Activated CD8-positive, alpha-beta T cell treated with anti-CD3 and anti-CD28 coated beads for 36 hours (primary cell): ENCODE measurements at regions of chr20 and their contacts with region 1.

Region 1: DNA sequence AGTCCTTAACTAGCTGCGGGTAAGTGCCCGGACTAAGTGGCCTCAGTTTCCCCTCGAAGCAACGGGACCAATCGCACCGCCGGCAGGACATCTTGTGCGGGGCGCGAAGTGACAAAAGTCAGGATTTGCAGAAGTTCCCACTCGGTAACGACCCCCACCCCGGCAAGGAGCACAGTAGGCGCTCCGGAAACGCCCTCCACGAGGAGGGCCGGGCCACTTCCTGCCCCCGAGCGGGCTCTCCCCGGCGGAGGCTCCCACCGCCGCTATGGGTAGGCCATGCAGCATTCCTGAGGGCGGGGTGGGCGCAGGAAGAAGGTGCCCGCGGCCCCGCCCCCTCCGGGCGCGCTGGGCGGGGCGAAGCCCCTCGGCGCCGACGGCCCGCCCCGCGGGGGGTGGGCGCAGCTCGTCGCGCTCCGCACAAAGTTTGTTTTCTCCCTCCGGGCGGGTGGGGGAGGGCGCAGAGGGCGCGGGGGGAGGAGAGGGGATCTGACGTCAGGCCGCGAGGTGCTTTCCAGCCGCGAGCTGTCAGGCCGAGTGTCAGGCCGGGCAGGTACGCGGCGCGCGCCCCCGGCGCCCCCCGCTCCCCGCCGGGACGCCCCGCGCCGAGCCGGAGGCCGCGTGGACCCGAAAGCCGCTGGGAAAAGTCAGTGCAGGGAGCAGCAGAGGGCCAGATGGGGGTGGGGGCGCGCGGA is at the start of gene TGIF2:
- DNase-seq: peak; percentile 91
- ATAC-seq: peak; percentile 81
- H3K4me3 Mint-ChIP-seq: peak within 1 kb of the TSS; percentile 91
- H3K27ac Mint-ChIP-seq: peak within 1 kb of the TSS; percentile 96
- H3K4me1 Mint-ChIP-seq: peaks cover 30% of the 10 kb centered on the region
- H3K27me3 Mint-ChIP-seq: no peaks in the 10 kb centered on the region
- CTCF ChIP-seq: no peak
- total RNA-seq, gene TGIF2: 55.3 to 56.8 TPM

Region 2: DNA sequence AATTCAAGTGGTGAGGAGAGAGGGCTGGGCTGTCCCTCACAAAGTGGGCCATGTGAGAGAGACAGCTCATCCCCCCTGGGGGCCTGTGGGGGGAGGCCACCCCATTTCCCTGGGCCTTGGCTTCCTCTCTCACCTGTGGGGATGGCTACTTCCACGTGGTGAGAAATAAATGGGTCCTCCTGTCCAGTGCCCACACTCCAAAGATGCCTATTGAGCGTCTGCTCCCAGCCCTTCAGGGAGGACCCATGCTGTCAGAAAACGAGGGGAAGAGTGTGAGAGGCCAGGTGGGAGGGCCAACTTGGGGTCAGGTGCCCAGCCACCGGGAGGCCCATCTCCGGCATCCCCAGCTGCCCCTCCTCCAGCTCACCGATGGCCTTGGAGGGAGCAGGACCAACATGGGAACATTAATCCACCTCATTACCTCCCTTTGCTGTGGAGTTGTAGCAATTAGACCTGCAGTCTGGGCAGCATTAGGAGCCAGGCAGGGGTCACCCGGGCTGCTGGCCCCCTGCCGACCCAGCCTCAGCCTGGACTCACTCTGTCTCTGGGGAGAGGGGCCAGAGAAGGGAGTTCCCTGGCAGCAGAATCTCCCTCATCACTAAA is 242.1 kb before region 1 on chr20:
- CTCF ChIA-PET with region 1: no interaction called
- POLR2A ChIA-PET with region 1: no interaction called
- intact Hi-C with region 1: no loop called
- DNase-seq: no peak
- ATAC-seq: no peak
- H3K4me3 Mint-ChIP-seq: no peak overlapping the region
- H3K27ac Mint-ChIP-seq: no peak overlapping the region
- H3K4me1 Mint-ChIP-seq: no peaks in the 10 kb centered on the region
- H3K27me3 Mint-ChIP-seq: peaks cover 23% of the 10 kb centered on the region
- CTCF ChIP-seq: no peak

Region 3: DNA sequence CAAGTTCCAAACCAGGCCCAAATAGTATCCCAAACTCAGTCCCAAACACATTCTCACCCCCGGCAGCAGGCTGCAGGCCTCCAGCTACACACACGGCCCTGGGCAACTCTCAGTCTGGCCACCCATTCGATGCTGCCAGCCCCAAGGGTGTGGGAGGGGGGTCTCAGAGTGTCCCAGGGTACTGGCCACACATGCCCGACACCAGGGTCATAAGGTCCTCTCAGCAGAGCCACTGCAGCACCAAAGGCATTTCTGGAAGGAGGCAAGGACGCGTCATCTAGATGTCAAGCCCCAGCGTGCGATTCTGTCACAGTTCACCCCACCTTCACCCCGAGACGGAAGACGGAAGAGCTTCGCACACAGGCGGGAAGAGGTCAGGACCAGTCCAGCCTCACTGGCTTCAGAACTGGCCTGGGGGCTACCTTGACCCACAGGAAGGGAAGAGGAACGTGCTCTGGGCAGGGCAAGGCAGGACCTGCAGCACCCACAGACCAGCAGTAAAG is 22.4 kb before region 1 on chr20:
- CTCF ChIA-PET with region 1: no interaction called
- POLR2A ChIA-PET with region 1: no interaction called
- intact Hi-C with region 1: no loop called
- DNase-seq: no peak
- ATAC-seq: no peak
- H3K4me3 Mint-ChIP-seq: no peak overlapping the region
- H3K27ac Mint-ChIP-seq: no peak overlapping the region
- H3K4me1 Mint-ChIP-seq: no peaks in the 10 kb centered on the region
- H3K27me3 Mint-ChIP-seq: no peaks in the 10 kb centered on the region
- CTCF ChIP-seq: no peak

Region 4: GRCh38 chr20:36591854-36592641 is 18.8 kb after region 1 on chr20:
- CTCF ChIA-PET with region 1: interaction called, 25 read pairs
- POLR2A ChIA-PET with region 1: interaction called, 214 read pairs
- intact Hi-C with region 1: no loop called
- DNase-seq: peak; percentile 85
- ATAC-seq: peak; percentile 65
- H3K4me3 Mint-ChIP-seq: peak overlapping the region; percentile 15
- H3K27ac Mint-ChIP-seq: peak overlapping the region; percentile 92
- H3K4me1 Mint-ChIP-seq: peaks cover 65% of the 10 kb centered on the region
- H3K27me3 Mint-ChIP-seq: no peaks in the 10 kb centered on the region
- CTCF ChIP-seq: no peak

Region 5: GRCh38 chr20:36611625-36612024 is 38.4 kb after region 1 on chr20:
- CTCF ChIA-PET with region 1: interaction called, 17 read pairs
- POLR2A ChIA-PET with region 1: interaction called, 98 read pairs
- intact Hi-C with region 1: loop called (anchors 5 kb)
- DNase-seq: no peak
- ATAC-seq: no peak
- H3K4me3 Mint-ChIP-seq: no peak overlapping the region
- H3K27ac Mint-ChIP-seq: no peak overlapping the region
- H3K4me1 Mint-ChIP-seq: peaks cover 32% of the 10 kb centered on the region
- H3K27me3 Mint-ChIP-seq: no peaks in the 10 kb centered on the region
- CTCF ChIP-seq: no peak